Body of pancreas (tissue), 4 donors: ENCODE measurements at regions of chr14 and their contacts with region 1.

Region 1: GRCh38 chr14:104650057-104650981 is 39.1 kb upstream of the INF2 start:
- DNase-seq: peak; percentile 49 to 71 (median 66)
- ATAC-seq: peak; percentile 71
- H3K4me3 ChIP-seq: no peak overlapping the region
- H3K27ac ChIP-seq: no peak overlapping the region
- H3K4me1 ChIP-seq: peaks cover 10% of the 10 kb centered on the region
- H3K27me3 ChIP-seq: no peaks in the 10 kb centered on the region
- CTCF ChIP-seq: peak; percentile 88 to 99 (median 92)
- POLR2A ChIP-seq: no peak

Region 2: DNA sequence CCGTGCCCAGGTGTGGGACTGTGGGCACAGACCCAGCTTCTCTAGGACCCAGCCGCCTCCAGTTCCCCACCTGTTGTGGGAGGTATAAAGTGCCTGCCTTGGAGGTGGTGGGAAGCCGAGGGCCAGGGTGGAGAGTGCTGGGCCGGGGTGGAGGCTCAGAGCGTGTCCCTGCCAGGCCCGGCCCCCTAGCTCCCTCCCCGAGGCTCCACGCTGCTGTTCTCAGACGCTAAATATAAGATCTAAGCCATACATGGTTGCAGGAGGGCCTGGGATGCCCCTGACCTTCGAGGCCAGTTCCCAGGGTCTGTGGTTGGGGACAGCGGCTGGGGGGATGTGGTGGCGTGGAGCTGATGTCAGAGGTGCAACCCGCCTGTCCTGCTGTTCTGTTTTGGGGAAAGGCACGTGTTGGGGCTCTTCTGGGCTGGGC is 49.9 kb after region 1 on chr14:
- intact Hi-C with region 1: loop called (anchors 5 kb)
- DNase-seq: no peak
- ATAC-seq: no peak
- H3K4me3 ChIP-seq: no peak overlapping the region
- H3K27ac ChIP-seq: no peak overlapping the region
- H3K4me1 ChIP-seq: no peaks in the 10 kb centered on the region
- H3K27me3 ChIP-seq: no peaks in the 10 kb centered on the region
- CTCF ChIP-seq: no peak
- POLR2A ChIP-seq: no peak

Region 3: DNA sequence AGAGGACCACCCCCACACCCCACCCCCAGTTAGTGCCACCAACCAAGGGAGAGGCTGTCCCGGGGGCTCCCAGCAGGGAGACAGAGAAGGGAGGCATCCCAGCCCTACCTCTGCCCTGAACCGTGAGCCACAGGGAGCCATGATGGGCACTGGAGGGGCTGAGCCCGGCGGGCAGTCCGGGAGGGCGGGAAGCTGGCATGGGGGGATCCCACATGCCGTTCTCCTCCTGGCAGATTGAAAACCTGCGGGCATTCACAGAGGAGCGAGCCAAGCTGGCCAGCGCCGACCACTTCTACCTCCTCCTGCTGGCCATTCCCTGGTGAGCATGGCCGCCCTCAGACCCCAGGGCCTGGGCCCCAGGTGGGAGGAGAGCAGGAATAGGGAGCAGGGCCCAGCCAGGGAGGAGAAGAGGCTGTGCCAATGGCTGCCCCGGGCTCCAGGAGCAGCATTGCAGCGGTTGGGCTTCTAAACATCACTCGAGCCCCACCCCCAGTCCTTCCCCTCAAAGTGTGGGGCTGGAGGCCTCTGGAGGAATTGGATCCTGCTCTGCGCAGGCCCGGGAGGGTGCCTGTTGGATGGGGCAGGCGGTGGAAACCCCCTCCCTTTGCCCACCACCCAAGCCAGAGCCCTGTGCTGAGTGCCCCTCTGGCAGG is 59.2 kb after region 1 on chr14:
- intact Hi-C with region 1: loop called (anchors 5 kb)
- DNase-seq: no peak
- ATAC-seq: no peak
- H3K4me3 ChIP-seq: no peak overlapping the region
- H3K27ac ChIP-seq: no peak overlapping the region
- H3K4me1 ChIP-seq: no peaks in the 10 kb centered on the region
- H3K27me3 ChIP-seq: no peaks in the 10 kb centered on the region
- CTCF ChIP-seq: no peak
- POLR2A ChIP-seq: no peak